ENCODE measurements at regions of chr22 and their contacts with region 1.

Region 1: DNA sequence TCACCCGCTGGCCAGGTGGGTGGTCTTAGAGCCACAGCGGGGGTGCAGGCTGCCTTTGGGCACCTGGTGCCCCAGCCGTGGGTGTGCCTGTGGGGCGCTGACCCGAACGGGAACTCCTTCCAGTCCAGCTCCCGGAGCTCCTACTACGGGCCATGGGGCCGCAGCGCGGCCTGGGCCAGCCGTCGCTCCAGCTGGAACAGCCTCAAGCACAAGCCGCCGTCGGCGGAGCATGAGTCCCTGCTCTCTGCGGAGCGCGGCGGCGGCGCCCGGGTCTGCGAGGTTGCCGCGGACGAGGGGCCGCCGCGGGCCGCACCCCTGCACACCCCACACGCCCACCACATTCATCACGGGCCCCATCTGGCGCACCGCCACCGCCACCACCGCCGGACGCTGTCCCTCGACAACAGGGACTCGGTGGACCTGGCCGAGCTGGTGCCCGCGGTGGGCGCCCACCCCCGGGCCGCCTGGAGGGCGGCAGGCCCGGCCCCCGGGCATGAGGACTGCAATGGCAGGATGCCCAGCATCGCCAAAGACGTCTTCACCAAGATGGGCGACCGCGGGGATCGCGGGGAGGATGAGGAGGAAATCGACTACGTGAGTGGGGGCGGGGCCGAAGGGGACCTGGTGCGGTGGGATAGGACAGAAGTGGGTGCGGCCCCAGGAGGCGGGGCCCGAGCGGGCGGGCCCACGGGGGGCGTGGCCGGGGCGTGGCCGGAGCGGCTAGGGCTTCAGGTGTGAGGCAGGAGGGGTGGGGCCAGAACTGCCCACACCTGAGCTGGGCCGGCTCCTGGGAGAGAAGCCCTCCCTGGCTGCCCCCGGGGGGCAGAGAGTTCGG is 91.5 kb downstream of the CACNA1I start:
- DNase-seq: peak in 1 of 2 experiments; percentile 60
- H3K4me3 ChIP-seq: no peak overlapping the region
- H3K27ac ChIP-seq: no peak overlapping the region
- H3K4me1 ChIP-seq: peaks cover 35% of the 10 kb centered on the region
- H3K27me3 ChIP-seq: no peaks in the 10 kb centered on the region
- CTCF ChIP-seq: no peak

Region 2: DNA sequence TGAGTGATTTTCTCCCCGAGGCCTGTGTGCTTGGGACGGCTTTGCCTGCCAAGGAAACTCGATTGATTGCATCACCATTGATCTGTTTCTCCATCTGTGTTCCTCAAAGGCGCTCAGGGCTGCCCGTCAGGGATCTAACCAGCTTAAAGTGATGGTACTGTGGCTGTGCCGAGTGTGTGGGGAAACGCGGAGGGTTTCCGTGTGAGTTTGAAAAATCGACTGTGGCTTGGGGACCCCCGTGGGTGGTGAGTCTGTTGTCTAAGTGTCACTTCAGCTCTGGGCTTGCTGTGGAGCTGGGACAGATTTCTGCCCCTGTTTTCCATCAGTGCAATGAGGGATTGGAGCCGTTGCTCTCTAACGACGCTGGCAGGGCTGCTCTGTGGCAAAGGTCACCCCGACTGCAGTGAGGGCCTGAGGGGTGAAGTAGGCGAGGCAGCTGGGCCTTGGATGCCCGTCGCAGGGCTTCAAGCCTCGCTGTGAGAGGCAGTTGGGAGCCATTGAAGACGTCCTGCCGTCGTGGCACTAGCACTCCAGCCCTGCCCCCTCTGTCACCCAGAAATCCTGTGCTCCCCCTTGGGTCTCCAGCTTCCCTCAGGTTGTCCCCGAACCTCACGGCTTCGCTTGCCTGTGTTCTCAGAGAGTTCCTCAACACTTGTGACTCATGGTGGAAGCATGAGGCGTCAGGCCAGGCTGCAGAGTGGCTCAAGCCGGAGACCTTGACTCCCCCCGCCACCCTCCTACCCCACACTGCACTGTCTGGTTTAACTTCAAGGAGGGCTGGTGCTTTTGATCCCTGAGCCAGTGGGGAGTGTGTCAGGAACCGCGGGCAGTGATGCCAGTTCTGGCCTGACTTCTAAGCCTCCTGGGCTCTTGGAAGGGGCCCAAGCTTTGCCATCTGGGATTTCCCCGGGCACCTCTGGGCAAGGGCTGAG is 69.7 kb before region 1 on chr22:
- CTCF ChIA-PET with region 1: no interaction called
- POLR2A ChIA-PET with region 1: no interaction called
- intact Hi-C with region 1: loop called (anchors 5 kb)
- DNase-seq: peak; percentile 89 to 94
- H3K4me3 ChIP-seq: peak overlapping the region; percentile 24; the same call in 1 of the 2 replicates
- H3K27ac ChIP-seq: peak overlapping the region; percentile 60
- H3K4me1 ChIP-seq: peaks cover 23% of the 10 kb centered on the region
- H3K27me3 ChIP-seq: no peaks in the 10 kb centered on the region
- CTCF ChIP-seq: no peak

Region 3: DNA sequence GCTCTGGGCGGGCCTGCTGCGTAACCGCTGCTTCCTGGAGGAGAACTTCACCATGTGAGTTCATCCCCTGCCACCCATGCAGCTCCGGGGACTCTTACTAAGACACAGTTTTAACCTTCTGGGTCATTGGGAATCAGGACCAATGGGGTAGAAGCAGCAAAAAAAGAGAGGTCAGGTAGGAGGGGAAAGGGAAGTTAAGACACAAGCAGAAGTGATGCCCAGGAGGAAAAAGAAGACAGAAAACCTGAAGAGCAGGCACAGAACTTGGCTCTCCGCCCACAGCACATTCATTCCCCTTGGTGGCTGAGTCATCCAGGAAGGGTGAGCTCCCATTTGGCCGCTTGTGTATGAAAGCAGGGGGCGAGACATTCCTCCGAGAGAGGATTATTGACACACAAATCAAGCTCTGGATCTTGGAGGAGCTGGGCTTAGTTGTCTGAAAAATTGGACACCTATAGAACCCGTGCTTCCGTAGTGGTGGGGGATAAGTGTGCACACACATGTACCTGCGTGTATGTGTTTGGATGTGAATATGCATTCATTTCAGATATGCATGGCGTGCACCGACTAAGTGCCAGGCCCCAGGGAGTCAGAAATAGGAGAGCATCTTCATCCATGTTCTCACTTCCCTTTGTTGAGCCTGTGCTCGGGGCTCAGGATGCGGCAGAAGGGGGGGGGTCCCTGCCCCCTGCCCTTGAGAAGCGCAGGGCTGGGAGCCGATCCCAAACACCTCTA is 27.2 kb before region 1 on chr22:
- CTCF ChIA-PET with region 1: no interaction called
- POLR2A ChIA-PET with region 1: interaction called, 4 read pairs
- intact Hi-C with region 1: loop called (anchors 1 kb)
- DNase-seq: peak; percentile 95 to 99
- H3K4me3 ChIP-seq: peak overlapping the region; percentile 39; the same call in 1 of the 2 replicates
- H3K27ac ChIP-seq: peak overlapping the region; percentile 55
- H3K4me1 ChIP-seq: peaks cover 54% of the 10 kb centered on the region
- H3K27me3 ChIP-seq: no peaks in the 10 kb centered on the region
- CTCF ChIP-seq: no peak

Region 4: GRCh38 chr22:39690881-39691605 is 29.0 kb after region 1 on chr22:
- CTCF ChIA-PET with region 1: no interaction called
- POLR2A ChIA-PET with region 1: no interaction called
- intact Hi-C with region 1: no loop called
- DNase-seq: no peak
- H3K4me3 ChIP-seq: no peak overlapping the region
- H3K27ac ChIP-seq: no peak overlapping the region
- H3K4me1 ChIP-seq: 0 out of 2 replicates have a peak, but pooled peaks cover 4% of the 10 kb centered on the region
- H3K27me3 ChIP-seq: peaks cover 55% of the 10 kb centered on the region
- CTCF ChIP-seq: no peak

Measured in PC-9 (cell line).